Activated T-helper 1 cell treated with anti-CD3 and anti-CD28 coated beads, Interleukin-12 subunit alpha, Interleukin-12 subunit beta, Interleukin-2, Interleukin-4 antibody, amounts not matched to agents 30 ng/mL and 10 ng/mL and 1 ng/mL, durations not matched to agents 14 hours and 24 hours and 36 hours (primary cell): ENCODE measurements at regions of chr5 and their contacts with region 1.

Region 1: GRCh38 chr5:154487541-154487940 is 9.5 kb upstream of the HAND1 start:
- DNase-seq: no peak
- H3K4me3 Mint-ChIP-seq: no peak overlapping the region
- H3K27ac Mint-ChIP-seq: no peak overlapping the region
- H3K4me1 Mint-ChIP-seq: peaks cover 15% of the 10 kb centered on the region
- H3K27me3 Mint-ChIP-seq: peaks cover 78% of the 10 kb centered on the region

Region 2: GRCh38 chr5:154467655-154468354 is 19.7 kb before region 1 on chr5:
- intact Hi-C with region 1: loop called (anchors 2 kb)
- DNase-seq: peak; percentile 54
- H3K4me3 Mint-ChIP-seq: no peak overlapping the region
- H3K27ac Mint-ChIP-seq: peak overlapping the region; percentile 48
- H3K4me1 Mint-ChIP-seq: no peaks in the 10 kb centered on the region
- H3K27me3 Mint-ChIP-seq: peaks cover 49% of the 10 kb centered on the region

Region 3: GRCh38 chr5:154475591-154476353 is 11.8 kb before region 1 on chr5:
- intact Hi-C with region 1: loop called (anchors 1 kb)
- DNase-seq: no peak
- H3K4me3 Mint-ChIP-seq: no peak overlapping the region
- H3K27ac Mint-ChIP-seq: peak overlapping the region; percentile 86
- H3K4me1 Mint-ChIP-seq: peaks cover 37% of the 10 kb centered on the region
- H3K27me3 Mint-ChIP-seq: peaks cover 85% of the 10 kb centered on the region

Region 4: GRCh38 chr5:154513669-154514084 is 26.1 kb after region 1 on chr5:
- intact Hi-C with region 1: loop called (anchors 2 kb)
- DNase-seq: no peak
- H3K4me3 Mint-ChIP-seq: no peak overlapping the region
- H3K27ac Mint-ChIP-seq: no peak overlapping the region
- H3K4me1 Mint-ChIP-seq: peaks cover 12% of the 10 kb centered on the region
- H3K27me3 Mint-ChIP-seq: peaks cover 10% of the 10 kb centered on the region